Naive thymus-derived CD4-positive, alpha-beta T cell (primary cell): ENCODE measurements at regions of chrX and their contacts with region 1.

Region 1: DNA sequence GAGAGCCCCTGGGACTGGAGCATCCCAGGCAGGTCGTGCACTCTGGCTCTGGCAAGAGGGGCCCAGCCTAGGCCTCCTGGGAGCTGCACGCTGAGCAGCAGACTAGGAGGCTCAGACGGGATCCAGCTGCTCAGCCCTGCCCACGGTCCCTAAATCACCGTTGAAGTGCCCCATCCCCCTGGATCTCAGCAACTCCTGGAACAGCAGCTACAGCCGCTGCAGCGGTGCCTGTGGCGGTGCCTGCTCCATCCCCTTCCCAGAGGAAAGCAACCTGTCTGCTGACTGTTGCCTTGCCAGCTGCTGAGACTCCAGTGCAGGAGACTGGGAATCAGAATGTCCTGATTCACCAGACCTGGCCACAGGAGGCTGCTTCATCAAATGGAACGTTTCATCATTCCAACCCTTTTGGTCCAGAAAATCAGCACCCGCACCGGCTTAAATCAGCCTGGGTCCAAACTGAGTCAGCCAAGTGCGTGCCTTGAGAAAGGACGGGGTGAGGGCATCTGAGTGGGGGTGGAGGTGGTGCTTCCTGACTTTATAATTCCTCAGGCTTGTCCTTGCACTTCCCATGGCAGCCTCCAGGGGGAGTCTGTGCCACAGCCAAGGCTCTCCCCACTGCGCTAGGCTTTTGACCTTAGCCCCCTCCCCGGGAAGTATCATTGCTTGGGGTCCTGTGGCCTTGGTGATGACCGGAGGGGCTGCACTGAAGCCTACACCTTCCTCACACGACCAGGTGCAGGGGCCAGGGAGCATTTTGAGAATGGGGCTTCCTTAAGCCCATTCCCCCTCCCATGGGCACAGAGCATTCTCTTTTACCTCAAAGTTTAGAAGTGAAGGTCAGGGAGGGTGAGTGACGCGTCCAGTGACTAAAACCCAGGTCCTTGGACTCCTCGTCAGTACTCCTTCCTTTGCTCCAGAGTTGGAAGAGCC is 6.5 kb downstream of the ZNF185 start:
- DNase-seq: peak in 6 of 9 donors; percentile 15 to 34 (median 24)
- ATAC-seq: peak; percentile 74
- H3K4me3 ChIP-seq: no peak overlapping the region
- H3K4me3 Mint-ChIP-seq: no peak overlapping the region
- H3K27ac ChIP-seq: no peak overlapping the region
- H3K27ac Mint-ChIP-seq: no peak overlapping the region
- H3K4me1 ChIP-seq: no peaks in the 10 kb centered on the region
- H3K4me1 Mint-ChIP-seq: no peaks in the 10 kb centered on the region
- H3K27me3 ChIP-seq: no peaks in the 10 kb centered on the region
- H3K27me3 Mint-ChIP-seq: peaks cover 0 to 8% (median 0%) of the 10 kb centered on the region in 5 donors

Region 2: GRCh38 chrX:152926279-152926678 is 21.9 kb after region 1 on chrX:
- CTCF ChIA-PET with region 1: no interaction called
- POLR2A ChIA-PET with region 1: no interaction called
- intact Hi-C with region 1: loop called in 1 of 2 experiments (anchors 1 kb)
- DNase-seq: peak in 7 of 9 donors; percentile 5 to 36 (median 27)
- ATAC-seq: peak; percentile 77
- H3K4me3 ChIP-seq: no peak overlapping the region
- H3K4me3 Mint-ChIP-seq: no peak overlapping the region
- H3K27ac ChIP-seq: no peak overlapping the region
- H3K27ac Mint-ChIP-seq: no peak overlapping the region
- H3K4me1 ChIP-seq: no peaks in the 10 kb centered on the region
- H3K4me1 Mint-ChIP-seq: peaks cover 0 to 17% (median 9%) of the 10 kb centered on the region in 7 donors
- H3K27me3 ChIP-seq: no peaks in the 10 kb centered on the region
- H3K27me3 Mint-ChIP-seq: no peaks in the 10 kb centered on the region

Region 3: GRCh38 chrX:153102436-153102835 is 198.0 kb after region 1 on chrX:
- CTCF ChIA-PET with region 1: no interaction called
- POLR2A ChIA-PET with region 1: no interaction called
- intact Hi-C with region 1: no loop called
- DNase-seq: no peak
- ATAC-seq: no peak
- H3K4me3 ChIP-seq: no peak overlapping the region
- H3K4me3 Mint-ChIP-seq: no peak overlapping the region
- H3K27ac ChIP-seq: no peak overlapping the region
- H3K27ac Mint-ChIP-seq: no peak overlapping the region
- H3K4me1 ChIP-seq: no peaks in the 10 kb centered on the region
- H3K4me1 Mint-ChIP-seq: peaks cover 3 to 14% (median 7%) of the 10 kb centered on the region in 7 donors
- H3K27me3 ChIP-seq: no peaks in the 10 kb centered on the region
- H3K27me3 Mint-ChIP-seq: no peaks in the 10 kb centered on the region

Region 4: GRCh38 chrX:153297376-153297775 is 393.0 kb after region 1 on chrX:
- CTCF ChIA-PET with region 1: no interaction called
- POLR2A ChIA-PET with region 1: no interaction called
- intact Hi-C with region 1: no loop called
- DNase-seq: no peak
- ATAC-seq: no peak
- H3K4me3 ChIP-seq: no peak overlapping the region
- H3K4me3 Mint-ChIP-seq: no peak overlapping the region
- H3K27ac ChIP-seq: no peak overlapping the region
- H3K27ac Mint-ChIP-seq: no peak overlapping the region
- H3K4me1 ChIP-seq: peaks cover 0 to 10% of the 10 kb centered on the region in 2 donors
- H3K4me1 Mint-ChIP-seq: peaks cover 0 to 16% (median 14%) of the 10 kb centered on the region in 7 donors
- H3K27me3 ChIP-seq: no peaks in the 10 kb centered on the region
- H3K27me3 Mint-ChIP-seq: peaks cover 0 to 38% (median 3%) of the 10 kb centered on the region in 5 donors